Heart right ventricle (tissue), 16 donors: ENCODE measurements at regions of chr5 and their contacts with region 1.

Region 1: GRCh38 chr5:159915904-159916840 is at the start of gene ADRA1B:
- DNase-seq: peak; percentile 62 to 78
- ATAC-seq: peak; percentile 76 to 93 (median 88)
- H3K4me3 ChIP-seq: peak within 1 kb of the TSS; percentile 16 to 63 (median 54)
- H3K27ac ChIP-seq: peak within 1 kb of the TSS in 9 of 10 donors; percentile 26 to 78 (median 70)
- H3K4me1 ChIP-seq: peaks cover 0 to 29% (median 11%) of the 10 kb centered on the region in 9 donors
- H3K27me3 ChIP-seq: peaks cover 0 to 59% (median 0%) of the 10 kb centered on the region in 7 donors
- CTCF ChIP-seq: peak; percentile 35 to 75 (median 55)
- total RNA-seq, gene ADRA1B: 0.77 to 4.1 (median 1.8) TPM

Region 2: DNA sequence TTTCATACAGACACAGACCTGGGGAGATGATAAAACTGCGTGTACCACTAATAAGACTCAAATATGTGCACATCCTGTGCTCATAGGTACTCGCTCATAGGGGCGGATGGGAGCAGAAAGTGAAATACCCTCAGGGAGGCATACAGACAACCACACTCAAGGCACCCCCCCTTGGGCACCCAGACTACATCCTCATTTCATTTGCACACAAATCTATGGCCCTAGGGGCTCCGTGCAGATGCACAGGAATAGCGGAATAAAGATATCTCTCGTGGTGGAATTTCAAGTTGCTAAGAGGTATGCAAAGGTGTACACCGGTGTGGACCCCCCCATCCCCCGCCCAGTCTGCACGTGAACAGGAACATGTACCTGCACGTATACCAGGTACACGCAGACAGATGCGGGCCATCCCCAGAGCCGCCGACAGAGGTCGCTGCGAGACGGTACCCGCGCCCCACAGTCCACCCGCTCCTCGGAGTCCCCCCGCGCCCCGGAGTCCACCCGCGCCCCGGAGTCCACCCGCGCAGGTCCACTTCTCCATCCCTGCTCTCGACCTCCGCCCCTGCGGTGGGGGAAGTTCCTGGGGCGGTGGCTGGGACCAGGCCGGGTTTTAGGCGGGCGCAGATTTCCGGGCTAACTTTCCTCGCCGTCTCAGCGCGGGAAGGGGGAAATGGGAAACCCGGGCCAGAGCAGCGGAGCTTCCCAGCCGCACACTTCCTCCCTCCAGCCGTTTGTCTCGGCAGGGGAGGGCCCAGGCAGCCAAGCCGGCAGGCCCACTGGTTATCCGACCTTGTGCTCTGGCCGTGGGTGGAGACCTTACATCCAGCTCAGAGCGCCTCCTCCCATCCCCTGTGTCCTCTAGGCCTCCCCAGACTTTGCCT is 584.8 kb before region 1 on chr5:
- intact Hi-C with region 1: loop called in 2 of 10 experiments (anchors 5 kb)
- DNase-seq: peak; percentile 56 to 73
- ATAC-seq: peak; percentile 82 to 93 (median 91)
- H3K4me3 ChIP-seq: peak overlapping the region; percentile 34 to 61 (median 50)
- H3K27ac ChIP-seq: peak overlapping the region in 5 of 10 donors; percentile 2 to 71 (median 48)
- H3K4me1 ChIP-seq: peaks cover 3 to 12% (median 10%) of the 10 kb centered on the region in 9 donors
- H3K27me3 ChIP-seq: peaks cover 0 to 33% (median 6%) of the 10 kb centered on the region in 7 donors
- CTCF ChIP-seq: peak; percentile 48 to 84 (median 78)

Region 3: GRCh38 chr5:159451197-159452052 is 464.7 kb before region 1 on chr5:
- intact Hi-C with region 1: loop called in 5 of 10 experiments (anchors 5 to 10 kb)
- DNase-seq: peak in 1 of 2 donors; percentile 71
- ATAC-seq: peak; percentile 90 to 97 (median 95)
- H3K4me3 ChIP-seq: no peak overlapping the region
- H3K27ac ChIP-seq: peak overlapping the region; percentile 42 to 89 (median 73)
- H3K4me1 ChIP-seq: peaks cover 0 to 22% (median 14%) of the 10 kb centered on the region in 9 donors
- H3K27me3 ChIP-seq: peaks cover 0 to 6% (median 0%) of the 10 kb centered on the region in 7 donors
- CTCF ChIP-seq: no peak

Region 4: GRCh38 chr5:159515909-159516415 is 400.2 kb before region 1 on chr5:
- intact Hi-C with region 1: loop called in 6 of 10 experiments (anchors 5 to 10 kb)
- DNase-seq: peak; percentile 17 to 53
- ATAC-seq: peak; percentile 49 to 78 (median 69)
- H3K4me3 ChIP-seq: no peak overlapping the region
- H3K27ac ChIP-seq: no peak overlapping the region
- H3K4me1 ChIP-seq: peaks cover 0 to 8% (median under 1%) of the 10 kb centered on the region in 9 donors
- H3K27me3 ChIP-seq: no peaks in the 10 kb centered on the region
- CTCF ChIP-seq: peak; percentile 45 to 72 (median 70)

Region 5: DNA sequence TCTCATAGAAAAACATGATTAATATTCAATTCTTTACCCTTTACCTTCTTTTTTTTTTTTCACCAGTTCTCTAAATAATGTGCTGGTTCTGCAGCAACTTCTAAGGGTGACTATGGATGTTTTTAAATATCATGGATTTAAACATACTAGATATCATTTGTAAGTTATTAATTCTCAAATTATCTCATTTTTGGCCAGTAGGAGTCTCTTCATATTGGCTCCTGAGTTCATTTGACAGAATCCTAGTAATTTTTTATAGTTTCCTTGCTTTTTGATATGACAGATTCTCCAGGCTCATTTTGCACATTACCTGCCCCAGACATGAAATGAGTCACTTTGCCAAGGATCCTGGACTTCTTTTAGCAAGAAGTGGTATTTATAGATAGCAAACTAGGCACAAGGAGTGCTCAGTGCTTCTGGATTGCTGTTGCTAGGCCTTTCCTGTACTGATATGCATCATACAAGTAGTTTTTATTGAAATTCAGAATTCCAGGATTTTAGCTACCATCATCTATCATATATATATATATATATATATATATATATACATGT is 384.5 kb before region 1 on chr5:
- intact Hi-C with region 1: loop called in 2 of 10 experiments (anchors 5 to 10 kb)
- DNase-seq: no peak
- ATAC-seq: no peak
- H3K4me3 ChIP-seq: no peak overlapping the region
- H3K27ac ChIP-seq: no peak overlapping the region
- H3K4me1 ChIP-seq: no peaks in the 10 kb centered on the region
- H3K27me3 ChIP-seq: no peaks in the 10 kb centered on the region
- CTCF ChIP-seq: peak in 5 of 9 donors; percentile 7 to 36 (median 23)

Region 6: DNA sequence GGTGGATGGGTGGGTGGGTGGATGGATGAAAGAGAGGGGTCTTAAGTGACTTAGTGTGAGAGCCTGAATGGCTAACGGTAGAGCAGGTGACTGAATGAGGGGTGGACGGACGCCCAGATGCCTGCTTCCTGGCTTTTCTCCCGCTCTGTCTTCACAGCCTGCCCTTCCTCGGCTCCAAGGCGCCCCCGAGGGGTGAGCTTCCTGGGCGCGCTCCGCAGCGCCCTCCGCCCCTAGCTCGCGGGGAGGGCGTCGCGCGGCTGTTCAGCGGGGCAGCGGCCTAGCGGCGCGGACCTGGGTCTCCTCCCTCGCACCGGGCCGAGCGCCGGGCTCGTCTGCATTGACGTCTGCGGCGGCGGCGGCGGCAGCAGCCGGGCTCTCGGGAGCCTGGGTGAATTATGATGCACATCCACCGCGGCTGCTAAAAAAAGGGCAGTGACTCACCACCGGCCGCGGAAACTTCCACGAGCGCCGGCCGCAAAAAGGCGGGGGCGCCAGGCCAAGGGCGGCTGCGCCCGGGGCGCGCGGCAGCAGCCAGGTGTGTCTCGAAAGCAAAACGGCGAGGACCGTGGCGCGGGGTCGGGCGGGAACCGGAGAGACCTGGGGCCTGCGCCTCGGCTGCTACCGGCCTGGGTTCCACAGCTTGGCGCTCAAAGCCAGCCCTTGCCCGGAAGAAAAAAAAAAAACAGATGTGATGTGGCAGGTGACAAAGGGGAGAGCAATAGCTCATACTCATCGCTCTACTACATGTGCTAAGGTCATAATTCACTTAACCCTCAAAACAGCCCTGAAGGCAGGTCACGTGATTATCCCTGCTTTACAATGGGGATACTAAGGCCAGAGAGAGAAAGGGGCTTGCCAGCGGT is 142.9 kb before region 1 on chr5:
- intact Hi-C with region 1: loop called in 3 of 10 experiments (anchors 5 to 10 kb)
- DNase-seq: peak; percentile 77 to 78
- ATAC-seq: peak; percentile 93 to 98 (median 96)
- H3K4me3 ChIP-seq: peak overlapping the region in 9 of 10 donors; percentile 7 to 48 (median 43)
- H3K27ac ChIP-seq: peak overlapping the region in 9 of 10 donors; percentile 51 to 86 (median 83)
- H3K4me1 ChIP-seq: peaks cover 0 to 13% (median 0%) of the 10 kb centered on the region in 9 donors
- H3K27me3 ChIP-seq: peaks cover 0 to 28% (median 0%) of the 10 kb centered on the region in 7 donors
- CTCF ChIP-seq: peak in 6 of 9 donors; percentile 19 to 58 (median 42)